Activated B cell treated with CpG ODN at 0.5 μM for 24 hours (primary cell): ENCODE measurements at regions of chr7 and their contacts with region 1.

Region 1: GRCh38 chr7:155032978-155033377 is 30.1 kb upstream of the PAXIP1 start:
- DNase-seq: no peak
- ATAC-seq: no peak
- H3K4me3 Mint-ChIP-seq: no peak overlapping the region
- H3K27ac Mint-ChIP-seq: no peak overlapping the region
- H3K4me1 Mint-ChIP-seq: no peaks in the 10 kb centered on the region
- H3K27me3 Mint-ChIP-seq: peaks cover 16% of the 10 kb centered on the region
- CTCF ChIP-seq: no peak

Region 2: GRCh38 chr7:155020996-155021395 is 12.0 kb before region 1 on chr7:
- CTCF ChIA-PET with region 1: no interaction called
- POLR2A ChIA-PET with region 1: interaction called, 11 read pairs
- intact Hi-C with region 1: no loop called
- DNase-seq: no peak
- ATAC-seq: no peak
- H3K4me3 Mint-ChIP-seq: no peak overlapping the region
- H3K27ac Mint-ChIP-seq: no peak overlapping the region
- H3K4me1 Mint-ChIP-seq: no peaks in the 10 kb centered on the region
- H3K27me3 Mint-ChIP-seq: no peaks in the 10 kb centered on the region
- CTCF ChIP-seq: no peak

Region 3: GRCh38 chr7:155524018-155524616 is 491.1 kb after region 1 on chr7:
- CTCF ChIA-PET with region 1: no interaction called
- POLR2A ChIA-PET with region 1: no interaction called
- intact Hi-C with region 1: no loop called
- DNase-seq: no peak
- ATAC-seq: no peak
- H3K4me3 Mint-ChIP-seq: no peak overlapping the region
- H3K27ac Mint-ChIP-seq: no peak overlapping the region
- H3K4me1 Mint-ChIP-seq: no peaks in the 10 kb centered on the region
- H3K27me3 Mint-ChIP-seq: peaks cover 25% of the 10 kb centered on the region
- CTCF ChIP-seq: no peak